SK-N-SH (cell line): ENCODE measurements at regions of chr20 and their contacts with region 1.

Region 1: DNA sequence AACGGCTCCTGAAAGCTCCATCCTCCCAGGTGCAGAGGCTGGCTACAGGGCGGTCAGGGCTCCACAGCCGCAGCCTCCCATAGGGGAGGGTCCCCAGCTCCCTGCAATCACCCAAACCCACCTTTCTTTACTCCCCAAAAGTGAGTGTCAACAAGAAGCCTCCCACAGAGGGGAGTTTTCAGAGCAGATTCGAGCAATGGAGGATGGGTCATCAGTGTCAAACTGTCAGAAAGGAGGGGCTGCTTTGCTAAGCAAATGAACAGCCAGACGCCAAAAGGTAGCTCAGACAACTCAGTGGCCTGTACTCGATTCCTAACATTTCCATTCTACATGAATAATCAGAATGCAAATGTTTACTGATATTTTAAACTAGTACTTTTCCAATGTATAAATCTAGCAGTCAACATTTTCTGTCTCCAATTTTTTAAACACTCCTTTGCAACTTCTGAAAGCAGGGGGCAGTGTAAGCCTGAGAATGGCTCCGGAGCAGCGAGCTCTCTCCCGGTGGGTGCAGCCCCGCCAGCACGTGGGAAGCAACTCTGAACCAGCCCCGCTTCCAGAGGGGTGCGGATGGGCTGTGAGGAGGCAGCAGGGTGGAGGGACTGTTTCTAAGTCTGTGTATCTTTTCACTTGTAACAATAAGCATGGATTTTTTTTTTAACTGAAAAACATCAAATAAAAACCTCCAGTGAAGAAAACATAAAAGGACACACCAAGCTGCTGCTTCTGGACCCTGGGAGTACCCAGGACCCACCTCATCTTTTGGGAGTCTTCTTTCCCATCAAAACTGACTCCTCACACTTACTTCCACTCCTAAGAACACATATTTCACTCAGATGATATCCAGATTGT is 54.9 kb downstream of the TAF4 start:
- DNase-seq: peak; percentile 93
- H3K4me3 ChIP-seq: peak overlapping the region in 1 of 2 experiments; percentile 19; a peak in 1 of 4 replicates
- H3K27ac ChIP-seq: no peak overlapping the region
- H3K4me1 ChIP-seq: no peaks in the 10 kb centered on the region; a peak in 1 of 4 replicates
- H3K27me3 ChIP-seq: no peaks in the 10 kb centered on the region
- CTCF ChIP-seq: peak; percentile 78
- EP300 ChIP-seq: no peak
- RAD21 ChIP-seq: peak; percentile 98

Region 2: GRCh38 chr20:61662226-61662967 is 348.4 kb before region 1 on chr20:
- CTCF ChIA-PET with region 1: no interaction called
- POLR2A ChIA-PET with region 1: no interaction called
- DNase-seq: peak; percentile 56
- H3K4me3 ChIP-seq: no peak overlapping the region
- H3K27ac ChIP-seq: no peak overlapping the region
- H3K4me1 ChIP-seq: peaks cover 0 to 11% of the 10 kb centered on the region in 2 experiments; a peak in 1 of 4 replicates
- H3K27me3 ChIP-seq: no peaks in the 10 kb centered on the region
- CTCF ChIP-seq: no peak
- EP300 ChIP-seq: no peak
- RAD21 ChIP-seq: no peak

Region 3: DNA sequence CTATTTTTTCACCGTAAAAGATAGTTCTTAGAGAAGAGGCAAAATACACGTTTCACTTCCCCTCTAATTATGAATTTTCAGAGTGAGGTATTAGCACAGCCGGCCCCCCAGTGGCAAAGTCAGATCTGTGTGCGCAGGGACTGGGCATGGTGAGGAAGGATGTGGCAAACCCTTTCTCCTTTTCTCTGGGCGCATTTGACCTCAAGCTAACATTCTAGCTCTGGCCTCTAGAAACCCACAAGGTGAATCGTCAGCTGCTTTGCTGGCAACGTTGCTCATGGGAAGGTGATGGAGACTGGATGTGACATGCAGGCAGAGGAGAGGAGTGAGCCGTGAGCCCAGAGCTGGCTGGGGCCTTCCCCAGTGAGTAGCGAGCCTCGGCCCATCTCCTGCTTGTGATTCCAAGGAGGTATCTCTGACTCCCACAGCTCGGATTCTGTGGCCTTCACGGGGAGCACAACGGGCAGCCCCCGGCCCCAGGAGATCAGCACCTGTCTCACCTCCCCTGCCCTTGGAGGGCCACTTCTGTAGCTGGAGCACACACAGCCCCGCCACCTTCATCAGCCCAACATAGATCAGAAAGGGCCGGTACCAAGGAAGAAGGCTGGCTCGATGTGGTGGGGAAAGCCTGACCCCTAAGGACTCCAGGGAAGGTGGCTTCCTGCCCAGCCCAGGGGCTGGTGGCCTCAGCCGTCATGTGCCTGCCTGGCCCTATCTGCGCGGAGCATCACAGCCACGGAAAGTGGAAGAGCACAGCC is 97.9 kb before region 1 on chr20:
- CTCF ChIA-PET with region 1: no interaction called
- POLR2A ChIA-PET with region 1: no interaction called
- DNase-seq: no peak
- H3K4me3 ChIP-seq: no peak overlapping the region
- H3K27ac ChIP-seq: no peak overlapping the region
- H3K4me1 ChIP-seq: no peaks in the 10 kb centered on the region
- H3K27me3 ChIP-seq: no peaks in the 10 kb centered on the region
- CTCF ChIP-seq: no peak
- EP300 ChIP-seq: no peak
- RAD21 ChIP-seq: no peak

Region 4: DNA sequence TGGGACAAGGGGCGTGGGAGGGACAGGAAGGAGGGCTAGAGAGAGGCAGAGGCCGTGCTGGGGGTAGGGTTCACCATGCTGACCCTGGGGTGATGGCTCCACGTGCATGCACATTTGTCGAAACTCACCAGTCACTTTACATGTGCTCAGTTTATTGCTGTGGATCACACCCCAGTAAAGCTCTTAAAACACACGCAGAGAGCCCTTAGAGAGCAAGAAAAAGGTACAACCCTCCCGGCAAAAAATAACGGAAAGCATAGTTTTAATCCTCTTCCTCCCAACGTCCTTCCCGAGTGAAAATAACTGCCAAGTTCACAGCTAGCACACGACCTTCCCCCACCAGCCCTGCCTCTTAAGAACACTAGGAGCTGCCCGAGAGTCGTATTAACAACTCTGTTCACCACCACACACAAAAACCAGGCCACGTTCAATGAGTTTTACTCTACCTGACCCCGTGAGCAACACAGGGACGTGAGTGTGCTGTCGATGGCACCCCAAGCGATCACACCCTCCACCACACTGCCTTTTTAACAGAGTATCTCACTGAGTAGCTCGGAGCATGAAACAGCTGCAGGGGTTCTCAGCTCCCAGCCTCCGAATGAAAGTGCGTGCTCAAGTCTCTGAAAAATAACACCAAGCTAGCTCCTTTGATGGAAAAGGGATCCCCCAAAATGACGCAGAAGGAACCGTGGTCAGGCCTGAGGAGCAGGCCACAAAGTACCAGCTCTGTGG is 15.2 kb after region 1 on chr20:
- CTCF ChIA-PET with region 1: interaction called, 38 read pairs
- POLR2A ChIA-PET with region 1: no interaction called
- DNase-seq: peak; percentile 58
- H3K4me3 ChIP-seq: no peak overlapping the region
- H3K27ac ChIP-seq: peak overlapping the region in 1 of 2 experiments; percentile 29; a peak in 2 of 4 replicates
- H3K4me1 ChIP-seq: peaks cover 0 to 59% of the 10 kb centered on the region in 2 experiments; a peak in 1 of 4 replicates
- H3K27me3 ChIP-seq: no peaks in the 10 kb centered on the region
- CTCF ChIP-seq: no peak
- EP300 ChIP-seq: no peak
- RAD21 ChIP-seq: peak; percentile 41

Region 5: GRCh38 chr20:62045529-62046285 is 34.9 kb after region 1 on chr20:
- CTCF ChIA-PET with region 1: interaction called, 10 read pairs
- POLR2A ChIA-PET with region 1: no interaction called
- DNase-seq: no peak
- H3K4me3 ChIP-seq: no peak overlapping the region
- H3K27ac ChIP-seq: no peak overlapping the region
- H3K4me1 ChIP-seq: peaks cover 0 to 17% of the 10 kb centered on the region in 2 experiments; a peak in 1 of 4 replicates
- H3K27me3 ChIP-seq: no peaks in the 10 kb centered on the region
- CTCF ChIP-seq: no peak
- EP300 ChIP-seq: no peak
- RAD21 ChIP-seq: no peak

Region 6: GRCh38 chr20:62065669-62066338 is 55.0 kb after region 1 on chr20 and contains the start of gene TAF4:
- CTCF ChIA-PET with region 1: interaction called, 17 read pairs
- POLR2A ChIA-PET with region 1: no interaction called
- DNase-seq: peak; percentile 100
- H3K4me3 ChIP-seq: peak within 1 kb of the TSS; percentile 70 to 77
- H3K27ac ChIP-seq: peak within 1 kb of the TSS; percentile 58 to 88; a peak in 3 of 4 replicates
- H3K4me1 ChIP-seq: peaks cover 20 to 30% of the 10 kb centered on the region in 2 experiments; a peak in 3 of 4 replicates
- H3K27me3 ChIP-seq: no peaks in the 10 kb centered on the region
- CTCF ChIP-seq: no peak
- EP300 ChIP-seq: peak in 1 of 2 experiments; percentile 15; a peak in 1 of 4 replicates
- RAD21 ChIP-seq: no peak
- polyA plus RNA-seq, gene TAF4: 2.9 and 4.8 TPM in 2 replicates

Region 7: GRCh38 chr20:62121776-62122631 is 111.2 kb after region 1 on chr20 and contains the start of gene LSM14B:
- CTCF ChIA-PET with region 1: interaction called, 44 read pairs
- POLR2A ChIA-PET with region 1: no interaction called
- DNase-seq: peak; percentile 99
- H3K4me3 ChIP-seq: peak within 1 kb of the TSS; percentile 78 to 82
- H3K27ac ChIP-seq: peak within 1 kb of the TSS; percentile 85 to 87
- H3K4me1 ChIP-seq: peaks cover 9 to 28% of the 10 kb centered on the region in 2 experiments; a peak in 3 of 4 replicates
- H3K27me3 ChIP-seq: no peaks in the 10 kb centered on the region
- CTCF ChIP-seq: no peak
- EP300 ChIP-seq: no peak
- RAD21 ChIP-seq: no peak
- polyA plus RNA-seq, gene LSM14B: 52.2 and 64.6 TPM in 2 replicates

Region 8: GRCh38 chr20:62143118-62143973 is 132.6 kb after region 1 on chr20 and contains the starts of genes PSMA7 and SS18L1:
- CTCF ChIA-PET with region 1: interaction called, 130 read pairs
- POLR2A ChIA-PET with region 1: interaction called, 3 read pairs
- DNase-seq: peak; percentile 97
- H3K4me3 ChIP-seq: peak within 1 kb of the TSS; percentile 88 to 92
- H3K27ac ChIP-seq: peak within 1 kb of the TSS; percentile 34 to 96; a peak in 3 of 4 replicates
- H3K4me1 ChIP-seq: peaks cover 5 to 27% of the 10 kb centered on the region in 2 experiments; a peak in 3 of 4 replicates
- H3K27me3 ChIP-seq: no peaks in the 10 kb centered on the region
- CTCF ChIP-seq: no peak
- EP300 ChIP-seq: no peak
- RAD21 ChIP-seq: no peak
- polyA plus RNA-seq, gene PSMA7: 687 and 801 TPM in 2 replicates
- polyA plus RNA-seq, gene SS18L1: 10.7 and 13.1 TPM in 2 replicates

Region 9: GRCh38 chr20:62156592-62157386 is 146.0 kb after region 1 on chr20:
- CTCF ChIA-PET with region 1: interaction called, 21 read pairs
- POLR2A ChIA-PET with region 1: no interaction called
- DNase-seq: peak; percentile 96
- H3K4me3 ChIP-seq: no peak overlapping the region
- H3K27ac ChIP-seq: peak overlapping the region in 1 of 2 experiments; percentile 9; a peak in 1 of 4 replicates
- H3K4me1 ChIP-seq: peaks cover 0 to 5% of the 10 kb centered on the region in 2 experiments; a peak in 1 of 4 replicates
- H3K27me3 ChIP-seq: no peaks in the 10 kb centered on the region
- CTCF ChIP-seq: peak; percentile 71
- EP300 ChIP-seq: no peak
- RAD21 ChIP-seq: peak; percentile 63